Calu3 (cell line): ENCODE measurements at regions of chr5 and their contacts with region 1.

Region 1: GRCh38 chr5:148912714-148913398 is 86.4 kb downstream of the ADRB2 start:
- DNase-seq: peak; percentile 68
- H3K4me3 Mint-ChIP-seq: no peak overlapping the region
- H3K27ac Mint-ChIP-seq: peak overlapping the region; percentile 93
- H3K4me1 Mint-ChIP-seq: peaks cover 89% of the 10 kb centered on the region
- H3K27me3 Mint-ChIP-seq: no peaks in the 10 kb centered on the region
- CTCF ChIP-seq: peak; percentile 28

Region 2: DNA sequence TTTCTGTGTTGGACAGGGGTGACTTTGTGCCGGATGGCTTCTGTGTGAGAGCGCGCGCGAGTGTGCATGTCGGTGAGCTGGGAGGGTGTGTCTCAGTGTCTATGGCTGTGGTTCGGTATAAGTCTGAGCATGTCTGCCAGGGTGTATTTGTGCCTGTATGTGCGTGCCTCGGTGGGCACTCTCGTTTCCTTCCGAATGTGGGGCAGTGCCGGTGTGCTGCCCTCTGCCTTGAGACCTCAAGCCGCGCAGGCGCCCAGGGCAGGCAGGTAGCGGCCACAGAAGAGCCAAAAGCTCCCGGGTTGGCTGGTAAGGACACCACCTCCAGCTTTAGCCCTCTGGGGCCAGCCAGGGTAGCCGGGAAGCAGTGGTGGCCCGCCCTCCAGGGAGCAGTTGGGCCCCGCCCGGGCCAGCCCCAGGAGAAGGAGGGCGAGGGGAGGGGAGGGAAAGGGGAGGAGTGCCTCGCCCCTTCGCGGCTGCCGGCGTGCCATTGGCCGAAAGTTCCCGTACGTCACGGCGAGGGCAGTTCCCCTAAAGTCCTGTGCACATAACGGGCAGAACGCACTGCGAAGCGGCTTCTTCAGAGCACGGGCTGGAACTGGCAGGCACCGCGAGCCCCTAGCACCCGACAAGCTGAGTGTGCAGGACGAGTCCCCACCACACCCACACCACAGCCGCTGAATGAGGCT is 86.7 kb before region 1 on chr5 and contains the start of gene ADRB2:
- CTCF ChIA-PET with region 1: interaction called, 5 read pairs
- intact Hi-C with region 1: loop called (anchors 2 kb)
- DNase-seq: peak; percentile 99
- H3K4me3 Mint-ChIP-seq: peak within 1 kb of the TSS; percentile 88
- H3K27ac Mint-ChIP-seq: peak within 1 kb of the TSS; percentile 79
- H3K4me1 Mint-ChIP-seq: peaks cover 16% of the 10 kb centered on the region
- H3K27me3 Mint-ChIP-seq: no peaks in the 10 kb centered on the region
- CTCF ChIP-seq: no peak
- total RNA-seq, gene ADRB2: 16.6 and 16.9 TPM in 2 replicates

Region 3: GRCh38 chr5:148966348-148966747 is 53.5 kb after region 1 on chr5:
- CTCF ChIA-PET with region 1: interaction called, 20 read pairs
- intact Hi-C with region 1: loop called (anchors 2 kb)
- DNase-seq: no peak
- H3K4me3 Mint-ChIP-seq: no peak overlapping the region
- H3K27ac Mint-ChIP-seq: peak overlapping the region; percentile 99
- H3K4me1 Mint-ChIP-seq: peaks cover 79% of the 10 kb centered on the region
- H3K27me3 Mint-ChIP-seq: no peaks in the 10 kb centered on the region
- CTCF ChIP-seq: no peak